ENCODE measurements at regions of chr1 and their contacts with region 1.

Region 1: DNA sequence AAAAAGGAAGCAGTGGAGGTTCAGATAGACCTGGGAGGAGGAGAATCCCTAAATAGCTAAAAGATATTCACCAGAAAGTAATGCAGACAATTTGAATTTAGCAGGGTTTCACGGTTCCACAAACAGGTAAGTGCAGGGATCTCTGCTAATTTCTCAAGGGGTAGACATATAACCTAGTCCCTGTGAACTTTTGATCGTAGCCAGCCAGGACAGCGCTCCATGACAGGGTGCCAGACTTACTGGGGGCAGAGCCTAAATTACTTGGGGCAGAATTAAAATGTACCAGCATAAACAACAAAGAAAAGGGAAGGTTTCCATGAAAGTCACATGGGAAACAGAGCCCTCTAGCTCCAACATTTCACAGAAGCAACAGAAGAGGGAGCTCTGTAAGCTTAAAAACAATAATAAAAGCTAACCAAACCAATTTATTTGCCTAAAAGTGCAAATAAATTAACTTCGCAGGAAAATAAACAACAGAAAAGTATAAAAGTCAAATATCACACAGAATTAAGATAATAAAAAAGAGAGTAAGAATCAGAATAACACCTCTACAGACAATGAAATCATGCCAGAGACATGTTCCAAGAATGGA is 198.3 kb downstream of the DUSP10 start:
- ATAC-seq: peak in 1 of 8 experiments; percentile 61
- H3K4me3 ChIP-seq: no peak overlapping the region
- H3K27ac ChIP-seq: no peak overlapping the region
- H3K4me1 ChIP-seq: no peaks in the 10 kb centered on the region

Region 2: GRCh38 chr1:221945669-221946068 is 402.0 kb after region 1 on chr1:
- in situ Hi-C with region 1: no loop called
- ATAC-seq: no peak
- H3K4me3 ChIP-seq: no peak overlapping the region
- H3K27ac ChIP-seq: no peak overlapping the region
- H3K4me1 ChIP-seq: no peaks in the 10 kb centered on the region

Region 3: DNA sequence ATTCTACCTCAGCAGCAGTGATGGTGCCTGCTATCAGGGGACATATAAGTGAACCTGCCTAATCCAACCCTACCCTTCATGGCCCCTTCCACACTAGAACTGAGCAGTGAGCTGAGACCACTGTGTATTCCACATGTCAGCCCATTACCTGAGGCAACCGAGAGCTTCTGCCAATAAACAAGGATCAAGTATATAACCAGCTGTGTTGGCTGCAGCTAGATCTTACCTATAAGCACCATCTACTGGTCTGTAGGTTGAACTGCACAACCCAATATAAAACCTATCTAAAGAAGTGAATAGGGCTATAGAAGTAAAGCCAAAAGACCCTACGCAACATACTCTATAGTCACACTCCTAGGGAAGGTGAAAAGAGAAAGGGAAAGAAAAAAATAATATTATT is 627.4 kb after region 1 on chr1:
- in situ Hi-C with region 1: loop called in 1 of 9 experiments (anchors 25 kb)
- ATAC-seq: peak in 6 of 8 experiments; percentile 50 to 80 (median 62)
- H3K4me3 ChIP-seq: no peak overlapping the region
- H3K27ac ChIP-seq: no peak overlapping the region
- H3K4me1 ChIP-seq: no peaks in the 10 kb centered on the region

Region 4: DNA sequence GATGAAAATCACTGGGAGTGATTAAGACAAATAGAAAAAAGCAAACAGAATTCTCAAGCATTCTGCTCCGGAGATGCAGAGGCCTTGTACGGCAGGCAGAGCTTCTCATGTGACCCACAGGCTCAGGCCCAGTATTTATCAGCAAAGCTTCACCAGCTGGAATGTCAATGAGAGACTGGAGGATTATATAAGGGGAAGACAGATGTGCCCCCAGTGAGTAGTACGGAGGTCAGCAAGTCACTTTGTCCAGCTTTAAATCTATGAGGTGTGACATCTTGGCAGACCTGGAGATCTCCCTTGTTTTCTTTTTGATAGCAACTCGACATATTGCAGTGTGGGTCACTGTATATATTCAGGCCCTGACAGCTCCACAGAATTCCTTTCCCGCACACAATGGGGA is 897.4 kb after region 1 on chr1:
- in situ Hi-C with region 1: loop called in 1 of 9 experiments (anchors 25 kb)
- ATAC-seq: peak in 5 of 8 experiments; percentile 93 to 97 (median 96)
- H3K4me3 ChIP-seq: no peak overlapping the region
- H3K27ac ChIP-seq: peak overlapping the region; percentile 14 to 74
- H3K4me1 ChIP-seq: peaks cover 38 to 43% of the 10 kb centered on the region in 2 donors

Measured in motor neuron (in vitro differentiated cells).